ENCODE measurements at regions of chr11 and their contacts with region 1.

Region 1: DNA sequence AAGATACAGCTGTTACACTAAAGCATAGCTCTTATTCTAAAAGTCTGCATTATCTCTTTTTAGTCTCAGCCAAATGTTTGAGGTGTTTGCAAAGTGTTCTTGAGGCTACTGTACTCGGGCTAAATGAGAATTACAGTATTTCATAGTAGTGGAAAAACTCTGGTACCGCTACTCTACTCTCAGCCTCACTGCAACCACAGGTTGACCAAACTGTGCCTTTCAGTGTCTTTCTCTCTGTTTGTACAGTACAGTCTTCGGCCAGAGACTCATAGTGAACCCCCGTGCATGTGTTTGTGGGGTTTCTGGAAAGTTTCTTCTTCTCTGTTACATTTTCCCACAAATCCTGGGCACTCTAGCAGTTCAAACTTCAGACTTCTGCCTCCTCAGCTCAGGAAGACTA is 7.4 kb upstream of the LUZP2 start:
- DNase-seq: no peak
- H3K4me3 ChIP-seq: no peak overlapping the region
- H3K27ac ChIP-seq: no peak overlapping the region
- H3K4me1 ChIP-seq: no peaks in the 10 kb centered on the region
- H3K27me3 ChIP-seq: no peaks in the 10 kb centered on the region
- CTCF ChIP-seq: no peak

Region 2: DNA sequence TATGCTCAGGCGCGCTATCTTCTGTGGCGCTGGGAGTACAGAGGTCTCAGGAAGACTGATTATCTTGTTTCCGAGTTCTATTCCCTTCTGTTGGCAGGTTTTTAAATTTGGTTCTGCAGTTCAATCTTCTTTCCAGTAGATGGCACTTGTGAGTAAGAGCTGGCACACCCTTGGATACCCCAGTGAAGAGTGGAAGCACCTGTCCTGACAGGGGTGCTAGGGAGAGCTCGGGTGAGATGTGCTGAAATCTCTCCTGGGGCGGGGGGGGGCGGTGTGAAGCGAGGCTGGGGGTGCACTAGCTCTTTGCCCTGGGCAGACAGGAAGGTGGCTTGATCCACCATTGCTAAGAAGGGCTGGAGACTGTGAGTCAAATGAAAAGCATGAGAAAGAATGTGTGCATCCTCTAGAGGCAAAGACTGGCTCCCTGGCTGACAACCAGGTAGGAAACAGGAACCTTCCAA is 949.3 kb before region 1 on chr11:
- CTCF ChIA-PET with region 1: no interaction called
- POLR2A ChIA-PET with region 1: no interaction called
- intact Hi-C with region 1: loop called (anchors 10 kb)
- DNase-seq: peak; percentile 55
- H3K4me3 ChIP-seq: no peak overlapping the region
- H3K27ac ChIP-seq: no peak overlapping the region
- H3K4me1 ChIP-seq: no peaks in the 10 kb centered on the region
- H3K27me3 ChIP-seq: no peaks in the 10 kb centered on the region
- CTCF ChIP-seq: peak; percentile 58

Region 3: GRCh38 chr11:24253237-24253760 is 236.2 kb before region 1 on chr11:
- CTCF ChIA-PET with region 1: no interaction called
- POLR2A ChIA-PET with region 1: no interaction called
- intact Hi-C with region 1: no loop called
- DNase-seq: no peak
- H3K4me3 ChIP-seq: no peak overlapping the region
- H3K27ac ChIP-seq: no peak overlapping the region
- H3K4me1 ChIP-seq: no peaks in the 10 kb centered on the region
- H3K27me3 ChIP-seq: no peaks in the 10 kb centered on the region
- CTCF ChIP-seq: no peak

Region 4: GRCh38 chr11:24731554-24731953 is 242.1 kb after region 1 on chr11:
- CTCF ChIA-PET with region 1: no interaction called
- POLR2A ChIA-PET with region 1: no interaction called
- intact Hi-C with region 1: no loop called
- DNase-seq: no peak
- H3K4me3 ChIP-seq: no peak overlapping the region
- H3K27ac ChIP-seq: no peak overlapping the region
- H3K4me1 ChIP-seq: peaks cover 5% of the 10 kb centered on the region
- H3K27me3 ChIP-seq: no peaks in the 10 kb centered on the region
- CTCF ChIP-seq: no peak